Dorsolateral prefrontal cortex (tissue), 120 donors: ENCODE measurements at regions of chr12 and their contacts with region 1.

Region 1: DNA sequence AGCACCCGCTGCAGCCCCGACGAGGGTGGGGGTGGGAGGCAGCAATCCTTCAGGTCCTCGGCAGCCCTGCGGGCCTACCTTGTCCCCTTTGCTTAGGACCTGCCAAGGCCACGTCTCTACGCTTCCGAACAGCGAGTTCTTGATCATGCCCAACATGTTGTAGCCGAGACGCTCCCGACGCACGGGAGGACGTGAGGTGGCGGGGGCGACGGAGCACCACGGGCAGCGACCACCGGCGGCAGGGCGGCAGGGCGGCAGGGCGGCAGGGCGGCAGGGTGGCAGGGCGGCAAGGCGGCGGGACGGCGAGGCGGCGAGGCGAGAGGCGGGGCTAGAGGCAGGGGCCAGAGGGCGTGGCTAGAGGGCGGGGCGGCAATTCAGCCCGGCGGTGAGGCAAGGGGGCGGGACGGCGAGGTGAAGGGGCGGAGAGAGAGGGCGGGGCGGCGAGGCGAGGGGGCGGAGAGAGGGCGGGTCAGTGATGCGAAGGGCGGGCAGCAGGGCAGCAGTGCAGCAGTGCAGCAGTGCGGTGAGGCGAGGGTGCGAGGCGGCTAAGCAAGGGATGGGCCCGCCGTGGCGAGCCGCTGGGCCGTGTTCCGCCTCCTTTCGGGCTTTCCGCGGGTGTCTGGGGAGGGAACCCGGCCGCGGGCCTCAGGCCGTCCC is at the start of gene HEBP1:
- DNase-seq: peak; percentile 92 to 99 (median 94)
- H3K4me3 ChIP-seq: peak within 1 kb of the TSS; percentile 55 to 91 (median 82)
- H3K27ac ChIP-seq: peak within 1 kb of the TSS; percentile 51 to 97 (median 92)
- H3K27me3 ChIP-seq: no peaks in the 10 kb centered on the region
- CTCF ChIP-seq: peak in 5 of 56 donors; percentile 6 to 16 (median 9)
- total RNA-seq, gene HEBP1: 24.8 to 61.5 (median 37.8) TPM

Region 2: GRCh38 chr12:12800406-12800805 is 199.7 kb before region 1 on chr12:
- intact Hi-C with region 1: no loop called
- DNase-seq: no peak
- H3K4me3 ChIP-seq: no peak overlapping the region
- H3K27ac ChIP-seq: peak overlapping the region in 1 of 59 donors; percentile 10
- H3K27me3 ChIP-seq: no peaks in the 10 kb centered on the region
- CTCF ChIP-seq: no peak

Region 3: DNA sequence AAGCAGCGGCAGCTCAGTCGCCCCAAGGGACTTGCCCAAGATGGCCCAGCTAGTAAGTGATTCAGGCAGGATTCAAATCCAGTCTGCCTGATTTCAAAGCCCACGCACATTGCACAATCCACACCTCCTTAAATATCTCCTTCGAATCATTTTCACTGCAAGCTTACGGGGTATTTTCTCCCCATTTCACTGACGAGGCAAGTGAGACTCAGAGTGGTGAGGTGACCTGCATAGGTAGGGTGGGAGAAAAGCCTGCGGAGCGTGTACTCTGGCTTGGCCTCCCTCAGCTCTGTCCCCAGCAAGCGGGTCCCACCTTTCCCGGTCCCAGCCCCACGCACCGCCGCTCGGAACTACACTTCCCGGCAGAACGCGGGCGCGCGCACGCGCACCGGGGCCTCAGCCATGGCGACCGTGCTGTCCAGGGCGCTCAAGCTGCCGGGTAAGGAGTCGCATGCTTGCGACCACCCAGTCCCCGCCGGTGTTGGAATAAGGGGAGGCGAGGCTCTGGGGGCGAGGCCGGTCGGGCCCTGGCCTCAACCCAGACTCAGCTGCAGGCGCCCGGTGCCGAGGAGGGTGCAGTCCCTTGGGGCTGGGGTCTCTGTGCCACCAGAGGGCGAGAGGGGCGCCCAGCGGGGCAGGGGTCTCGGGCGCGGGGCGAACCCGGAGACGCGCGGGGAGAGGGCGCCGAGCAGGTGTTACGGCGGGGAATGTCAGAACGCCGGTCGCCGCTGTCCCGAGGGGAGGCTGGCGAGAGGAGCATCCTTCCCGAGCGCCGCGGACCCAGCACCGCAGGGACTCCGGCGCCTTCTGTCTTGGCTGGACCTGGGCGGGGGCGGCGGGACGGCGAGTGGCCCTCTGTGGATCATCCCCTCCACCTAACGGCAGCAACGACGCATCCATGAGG is 44.2 kb after region 1 on chr12 and contains the start of gene FAM234B:
- intact Hi-C with region 1: loop called in 1 of 2 experiments (anchors 5 kb)
- DNase-seq: peak; percentile 68 to 92 (median 79)
- H3K4me3 ChIP-seq: peak within 1 kb of the TSS; percentile 72 to 100 (median 97)
- H3K27ac ChIP-seq: peak within 1 kb of the TSS in 50 of 59 donors; percentile 30 to 95 (median 71)
- H3K27me3 ChIP-seq: no peaks in the 10 kb centered on the region
- CTCF ChIP-seq: peak in 49 of 56 donors; percentile 7 to 62 (median 39)
- total RNA-seq, gene FAM234B: 32.8 to 110 (median 78.5) TPM

Region 4: GRCh38 chr12:13074396-13075107 is 74.5 kb after region 1 on chr12:
- intact Hi-C with region 1: no loop called
- DNase-seq: no peak
- H3K4me3 ChIP-seq: no peak overlapping the region
- H3K27ac ChIP-seq: peak overlapping the region in 24 of 59 donors; percentile 6 to 64 (median 35)
- H3K27me3 ChIP-seq: no peaks in the 10 kb centered on the region
- CTCF ChIP-seq: no peak

Region 5: GRCh38 chr12:13100882-13101769 is 101.0 kb after region 1 on chr12:
- intact Hi-C with region 1: loop called (anchors 5 kb)
- DNase-seq: peak; percentile 65 to 91 (median 80)
- H3K4me3 ChIP-seq: peak overlapping the region; percentile 49 to 88 (median 70)
- H3K27ac ChIP-seq: peak overlapping the region; percentile 81 to 99 (median 96)
- H3K27me3 ChIP-seq: no peaks in the 10 kb centered on the region
- CTCF ChIP-seq: peak in 19 of 56 donors; percentile 4 to 57 (median 18)